Activated CD8-positive, alpha-beta T cell treated with anti-CD3 and anti-CD28 coated beads, Interleukin-2, amount 10 ng/mL, durations not matched to agents 7 days and 5 days (primary cell): ENCODE measurements at regions of chr12 and their contacts with region 1.

Region 1: GRCh38 chr12:13534645-13535398 is 338.3 kb downstream of the EMP1 start:
- DNase-seq: peak; percentile 60
- ATAC-seq: no peak
- H3K4me3 Mint-ChIP-seq: no peak overlapping the region
- H3K27ac Mint-ChIP-seq: no peak overlapping the region
- H3K4me1 Mint-ChIP-seq: no peaks in the 10 kb centered on the region
- H3K27me3 Mint-ChIP-seq: no peaks in the 10 kb centered on the region

Region 2: GRCh38 chr12:13546231-13546630 is 11.4 kb after region 1 on chr12:
- CTCF ChIA-PET with region 1: interaction called, 10 read pairs
- POLR2A ChIA-PET with region 1: no interaction called
- DNase-seq: no peak
- ATAC-seq: no peak
- H3K4me3 Mint-ChIP-seq: no peak overlapping the region
- H3K27ac Mint-ChIP-seq: no peak overlapping the region
- H3K4me1 Mint-ChIP-seq: no peaks in the 10 kb centered on the region
- H3K27me3 Mint-ChIP-seq: peaks cover 2% of the 10 kb centered on the region